K562 (cell line): ENCODE measurements at regions of chr17 and their contacts with region 1.

Region 1: GRCh38 chr17:1673041-1673785 is 11.5 kb downstream of the PRPF8 start:
- DNase-seq: no peak
- ATAC-seq: no peak
- H3K4me3 ChIP-seq: no peak overlapping the region
- H3K27ac ChIP-seq: no peak overlapping the region; the same call in 2 of the 3 replicates
- H3K4me1 ChIP-seq: peaks cover 0 to 3% of the 10 kb centered on the region in 2 experiments; a peak in 2 of 5 replicates
- H3K27me3 ChIP-seq: no peaks in the 10 kb centered on the region
- CTCF ChIP-seq: no peak
- EP300 ChIP-seq: no peak
- POLR2A ChIP-seq: no peak
- RAD21 ChIP-seq: no peak

Region 2: DNA sequence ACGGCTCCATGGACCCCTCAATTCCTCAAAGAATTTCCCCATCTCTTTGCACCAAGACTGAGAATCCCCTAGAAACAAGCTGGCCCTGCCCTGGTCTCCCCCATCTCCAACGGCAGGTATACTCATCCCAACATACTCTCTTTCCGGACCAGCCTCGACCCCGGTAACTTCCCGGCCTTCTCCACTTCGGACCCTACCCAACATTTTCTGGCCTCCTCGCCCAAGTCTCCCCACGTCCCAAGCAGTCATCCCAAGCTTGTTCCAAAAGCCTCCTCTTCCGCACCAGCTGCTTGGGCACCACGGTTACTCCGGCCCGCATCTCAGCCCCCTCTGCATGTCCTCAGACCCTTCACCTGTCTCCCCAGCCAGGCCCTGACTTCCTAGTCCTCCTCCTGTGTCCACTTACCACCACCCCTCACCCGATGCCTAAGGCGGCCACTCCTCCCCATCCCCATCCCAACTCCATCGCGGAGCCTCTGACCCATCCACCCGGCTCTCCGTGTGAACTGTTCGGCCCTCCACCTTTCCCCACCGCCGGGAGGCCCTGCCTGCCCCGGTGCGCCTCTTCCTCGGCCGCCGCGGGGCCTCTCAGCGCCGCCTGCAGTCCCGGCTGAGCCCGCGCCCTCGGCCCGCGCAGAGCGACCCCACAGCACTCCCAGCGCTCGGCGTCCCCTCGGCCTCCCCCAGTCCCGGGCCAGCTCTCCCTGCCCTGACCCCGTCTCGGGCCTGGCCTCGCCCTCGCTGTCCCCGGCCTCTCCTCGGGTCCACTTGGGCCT is 111.6 kb before region 1 on chr17:
- CTCF ChIA-PET with region 1: no interaction called
- POLR2A ChIA-PET with region 1: no interaction called
- in situ Hi-C with region 1: no loop called
- intact Hi-C with region 1: no loop called
- DNase-seq: peak in 3 of 4 experiments; percentile 45 to 48 (median 47)
- ATAC-seq: peak; percentile 72
- H3K4me3 ChIP-seq: peak overlapping the region; percentile 63
- H3K27ac ChIP-seq: peak overlapping the region; percentile 78; the same call in 1 of the 3 replicates
- H3K4me1 ChIP-seq: peaks cover 19 to 55% of the 10 kb centered on the region in 2 experiments; a peak in 4 of 5 replicates
- H3K27me3 ChIP-seq: no peaks in the 10 kb centered on the region
- CTCF ChIP-seq: peak in 2 of 3 experiments; percentile 35 to 79; a peak in 4 of 6 replicates
- EP300 ChIP-seq: no peak
- POLR2A ChIP-seq: no peak
- RAD21 ChIP-seq: peak in 1 of 2 experiments; percentile 28; a peak in 2 of 4 replicates

Region 3: DNA sequence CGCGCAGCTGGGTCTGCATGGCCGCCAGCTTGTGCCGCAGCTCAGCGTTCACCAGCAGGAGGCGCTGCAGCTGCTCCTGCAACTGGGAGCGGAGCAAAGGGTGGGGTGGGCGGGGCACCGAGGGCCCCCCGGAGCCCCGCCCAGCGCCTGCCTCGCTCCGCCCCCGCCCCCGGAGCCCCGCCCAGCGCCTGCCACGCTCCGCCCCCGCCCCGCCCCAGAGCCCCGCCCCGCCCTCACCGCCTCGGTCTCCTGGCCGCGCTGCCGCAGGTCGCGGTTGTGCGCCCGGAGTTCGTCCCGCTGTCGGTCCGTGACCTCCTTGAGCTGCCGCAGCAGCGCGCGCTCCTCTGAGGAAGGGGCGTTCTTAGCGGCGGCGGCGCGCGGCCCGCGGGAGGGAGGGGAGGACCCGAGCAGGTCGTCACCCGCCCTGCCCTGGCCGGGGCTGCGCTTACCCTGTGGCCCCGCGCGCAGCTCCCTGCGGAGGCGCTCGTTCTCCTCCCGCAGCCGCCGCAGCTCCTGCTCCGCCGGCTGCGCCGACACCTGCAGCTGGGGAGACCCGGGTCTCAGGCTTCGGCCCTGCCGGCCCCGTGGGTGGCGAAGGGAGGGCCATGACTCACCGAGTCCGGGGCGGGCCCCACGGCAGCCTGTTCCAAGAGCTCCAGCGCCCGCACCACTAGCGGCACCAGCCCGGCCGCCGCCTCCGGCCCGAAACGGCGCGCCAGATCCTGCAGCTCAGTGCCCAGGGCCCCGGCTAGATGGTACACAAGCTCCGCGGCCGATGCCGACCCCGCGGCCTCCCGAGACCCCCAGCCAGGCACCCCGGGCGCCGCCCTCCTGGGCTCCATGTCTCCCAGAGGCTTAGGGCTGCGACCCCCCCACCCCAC is 24.0 kb before region 1 on chr17:
- CTCF ChIA-PET with region 1: no interaction called
- POLR2A ChIA-PET with region 1: interaction called, 12 read pairs
- in situ Hi-C with region 1: no loop called
- intact Hi-C with region 1: no loop called
- DNase-seq: peak; percentile 93 to 95 (median 94)
- ATAC-seq: peak; percentile 75
- H3K4me3 ChIP-seq: peak overlapping the region; percentile 70
- H3K27ac ChIP-seq: peak overlapping the region; percentile 99
- H3K4me1 ChIP-seq: peaks cover 21 to 59% of the 10 kb centered on the region in 2 experiments
- H3K27me3 ChIP-seq: no peaks in the 10 kb centered on the region
- CTCF ChIP-seq: peak; percentile 68 to 99 (median 97)
- EP300 ChIP-seq: no peak
- POLR2A ChIP-seq: peak; percentile 85
- RAD21 ChIP-seq: no peak

Region 4: DNA sequence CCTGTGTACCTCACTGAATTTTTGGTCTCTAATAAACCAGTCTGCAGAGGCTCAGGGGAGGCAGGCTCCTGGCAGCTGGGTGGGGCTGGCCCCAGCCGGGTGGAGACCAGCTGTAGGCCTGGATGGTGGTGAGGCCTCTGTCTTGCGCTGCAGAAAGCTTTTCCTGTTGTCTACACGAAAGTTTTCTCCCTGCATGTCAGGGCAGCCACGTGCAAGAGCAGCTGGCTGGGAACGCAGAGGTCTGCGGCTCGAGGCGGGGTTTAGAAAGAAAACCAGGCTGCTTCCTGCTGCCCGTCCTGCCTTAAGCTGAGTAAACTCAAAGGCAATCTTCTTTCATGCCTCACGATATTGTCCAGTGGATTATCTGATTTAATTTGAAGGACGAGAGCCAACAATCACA is 91.1 kb after region 1 on chr17:
- CTCF ChIA-PET with region 1: no interaction called
- POLR2A ChIA-PET with region 1: no interaction called
- in situ Hi-C with region 1: no loop called
- intact Hi-C with region 1: no loop called
- DNase-seq: peak in 1 of 4 experiments; percentile 20
- ATAC-seq: no peak
- H3K4me3 ChIP-seq: no peak overlapping the region
- H3K27ac ChIP-seq: 0 out of 3 replicates have a peak overlapping the region, but pooled peaks have one; percentile 28
- H3K4me1 ChIP-seq: peaks cover 21 to 34% of the 10 kb centered on the region in 2 experiments; a peak in 4 of 5 replicates
- H3K27me3 ChIP-seq: no peaks in the 10 kb centered on the region
- CTCF ChIP-seq: no peak
- EP300 ChIP-seq: no peak
- POLR2A ChIP-seq: no peak
- RAD21 ChIP-seq: no peak

Region 5: GRCh38 chr17:1783834-1784611 is 110.8 kb after region 1 on chr17:
- CTCF ChIA-PET with region 1: interaction called, 10 read pairs
- POLR2A ChIA-PET with region 1: no interaction called
- in situ Hi-C with region 1: no loop called
- intact Hi-C with region 1: loop called (anchors 5 kb)
- DNase-seq: peak; percentile 42 to 56 (median 48)
- ATAC-seq: peak; percentile 93
- H3K4me3 ChIP-seq: no peak overlapping the region
- H3K27ac ChIP-seq: peak overlapping the region; percentile 38; the same call in 1 of the 3 replicates
- H3K4me1 ChIP-seq: peaks cover 5 to 8% of the 10 kb centered on the region in 2 experiments; a peak in 4 of 5 replicates
- H3K27me3 ChIP-seq: no peaks in the 10 kb centered on the region
- CTCF ChIP-seq: peak; percentile 59 to 76 (median 66)
- EP300 ChIP-seq: no peak
- POLR2A ChIP-seq: no peak
- RAD21 ChIP-seq: peak; percentile 73 to 80

Region 6: GRCh38 chr17:1865252-1866037 is 192.2 kb after region 1 on chr17:
- CTCF ChIA-PET with region 1: no interaction called
- POLR2A ChIA-PET with region 1: no interaction called
- in situ Hi-C with region 1: loop called (anchors 10 kb)
- intact Hi-C with region 1: no loop called
- DNase-seq: peak; percentile 47 to 61 (median 50)
- ATAC-seq: peak; percentile 72
- H3K4me3 ChIP-seq: no peak overlapping the region
- H3K27ac ChIP-seq: no peak overlapping the region
- H3K4me1 ChIP-seq: no peaks in the 10 kb centered on the region; a peak in 1 of 5 replicates
- H3K27me3 ChIP-seq: no peaks in the 10 kb centered on the region
- CTCF ChIP-seq: peak; percentile 51 to 66 (median 57)
- EP300 ChIP-seq: no peak
- POLR2A ChIP-seq: no peak
- RAD21 ChIP-seq: peak; percentile 39 to 55

Region 7: GRCh38 chr17:2238432-2239169 is 565.4 kb after region 1 on chr17:
- CTCF ChIA-PET with region 1: no interaction called
- POLR2A ChIA-PET with region 1: no interaction called
- in situ Hi-C with region 1: no loop called
- intact Hi-C with region 1: no loop called
- DNase-seq: no peak
- ATAC-seq: no peak
- H3K4me3 ChIP-seq: no peak overlapping the region
- H3K27ac ChIP-seq: no peak overlapping the region
- H3K4me1 ChIP-seq: no peaks in the 10 kb centered on the region; a peak in 1 of 5 replicates
- H3K27me3 ChIP-seq: no peaks in the 10 kb centered on the region
- CTCF ChIP-seq: no peak
- EP300 ChIP-seq: no peak
- POLR2A ChIP-seq: no peak
- RAD21 ChIP-seq: no peak